ENCODE measurements at regions of chr6 and their contacts with region 1.

Region 1: DNA sequence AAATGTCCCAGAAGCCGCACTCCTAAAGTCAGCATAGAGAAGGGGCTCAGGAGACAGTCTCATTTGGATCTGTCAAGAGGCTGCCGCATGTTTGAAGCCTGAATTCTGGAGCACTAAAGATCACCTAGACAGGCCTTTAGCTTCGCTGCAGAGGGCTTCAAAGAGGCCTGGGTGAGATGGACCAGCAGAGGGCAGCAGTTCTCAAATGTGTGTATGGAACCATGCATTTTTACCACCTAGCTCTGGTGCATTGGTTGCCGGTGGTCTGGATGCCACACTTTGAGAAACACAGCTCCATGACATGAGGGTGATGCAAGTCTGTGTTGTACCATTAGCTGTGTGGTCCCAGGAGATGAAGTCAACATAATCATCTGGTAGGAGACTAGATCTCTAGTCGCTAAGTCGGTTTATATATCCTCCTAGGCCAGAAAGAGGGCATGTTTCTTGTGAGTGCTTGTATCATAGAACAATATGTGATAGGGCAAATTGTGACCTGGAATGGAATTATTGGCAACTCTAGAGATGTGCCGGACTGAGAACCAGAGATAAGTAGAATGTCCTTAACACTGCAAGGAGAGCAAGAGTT is 64.8 kb downstream of the KIAA0319 start:
- DNase-seq: peak; percentile 85
- ATAC-seq: peak; percentile 89
- H3K4me3 Mint-ChIP-seq: no peak overlapping the region
- H3K27ac Mint-ChIP-seq: no peak overlapping the region
- H3K4me1 Mint-ChIP-seq: peaks cover 25% of the 10 kb centered on the region
- H3K27me3 Mint-ChIP-seq: no peaks in the 10 kb centered on the region
- CTCF ChIP-seq: peak; percentile 55; the same call in 1 of the 2 replicates

Region 2: GRCh38 chr6:24481449-24481848 is 99.7 kb before region 1 on chr6:
- CTCF ChIA-PET with region 1: no interaction called
- POLR2A ChIA-PET with region 1: no interaction called
- DNase-seq: no peak
- ATAC-seq: no peak
- H3K4me3 Mint-ChIP-seq: no peak overlapping the region
- H3K27ac Mint-ChIP-seq: no peak overlapping the region
- H3K4me1 Mint-ChIP-seq: no peaks in the 10 kb centered on the region
- H3K27me3 Mint-ChIP-seq: no peaks in the 10 kb centered on the region
- CTCF ChIP-seq: no peak

Region 3: GRCh38 chr6:24547243-24547642 is 33.9 kb before region 1 on chr6:
- CTCF ChIA-PET with region 1: interaction called, 12 read pairs
- POLR2A ChIA-PET with region 1: no interaction called
- DNase-seq: peak; percentile 36
- ATAC-seq: peak; percentile 69
- H3K4me3 Mint-ChIP-seq: no peak overlapping the region
- H3K27ac Mint-ChIP-seq: no peak overlapping the region
- H3K4me1 Mint-ChIP-seq: peaks cover 10% of the 10 kb centered on the region
- H3K27me3 Mint-ChIP-seq: no peaks in the 10 kb centered on the region
- CTCF ChIP-seq: no peak

Region 4: GRCh38 chr6:24595512-24596217 is 14.5 kb after region 1 on chr6:
- CTCF ChIA-PET with region 1: interaction called, 15 read pairs
- POLR2A ChIA-PET with region 1: no interaction called
- DNase-seq: no peak
- ATAC-seq: no peak
- H3K4me3 Mint-ChIP-seq: no peak overlapping the region
- H3K27ac Mint-ChIP-seq: no peak overlapping the region
- H3K4me1 Mint-ChIP-seq: peaks cover 11% of the 10 kb centered on the region
- H3K27me3 Mint-ChIP-seq: no peaks in the 10 kb centered on the region
- CTCF ChIP-seq: no peak

Region 5: GRCh38 chr6:24646782-24647181 is 65.6 kb after region 1 on chr6:
- CTCF ChIA-PET with region 1: interaction called, 19 read pairs
- POLR2A ChIA-PET with region 1: interaction called, 3 read pairs
- DNase-seq: no peak
- ATAC-seq: no peak; the same call in 1 of the 2 replicates
- H3K4me3 Mint-ChIP-seq: peak overlapping the region; percentile 91
- H3K27ac Mint-ChIP-seq: no peak overlapping the region
- H3K4me1 Mint-ChIP-seq: peaks cover 12% of the 10 kb centered on the region
- H3K27me3 Mint-ChIP-seq: peaks cover 7% of the 10 kb centered on the region
- CTCF ChIP-seq: no peak

Region 6: GRCh38 chr6:24683297-24684296 is 102.4 kb after region 1 on chr6:
- CTCF ChIA-PET with region 1: interaction called, 19 read pairs
- POLR2A ChIA-PET with region 1: no interaction called
- DNase-seq: no peak
- ATAC-seq: peak; percentile 75
- H3K4me3 Mint-ChIP-seq: peak overlapping the region; percentile 60
- H3K27ac Mint-ChIP-seq: peak overlapping the region; percentile 100
- H3K4me1 Mint-ChIP-seq: peaks cover 71% of the 10 kb centered on the region
- H3K27me3 Mint-ChIP-seq: no peaks in the 10 kb centered on the region
- CTCF ChIP-seq: no peak

Region 7: GRCh38 chr6:24883618-24884017 is 302.4 kb after region 1 on chr6:
- CTCF ChIA-PET with region 1: no interaction called
- POLR2A ChIA-PET with region 1: no interaction called
- DNase-seq: no peak
- ATAC-seq: no peak
- H3K4me3 Mint-ChIP-seq: no peak overlapping the region
- H3K27ac Mint-ChIP-seq: 0 out of 2 replicates have a peak overlapping the region, but pooled peaks have one; percentile 41
- H3K4me1 Mint-ChIP-seq: peaks cover 54% of the 10 kb centered on the region
- H3K27me3 Mint-ChIP-seq: no peaks in the 10 kb centered on the region
- CTCF ChIP-seq: no peak

Region 8: GRCh38 chr6:24910961-24911712 is 330.0 kb after region 1 on chr6:
- CTCF ChIA-PET with region 1: no interaction called
- POLR2A ChIA-PET with region 1: no interaction called
- DNase-seq: peak; percentile 69
- ATAC-seq: peak; percentile 50
- H3K4me3 Mint-ChIP-seq: peak overlapping the region; percentile 78
- H3K27ac Mint-ChIP-seq: no peak overlapping the region
- H3K4me1 Mint-ChIP-seq: peaks cover 34% of the 10 kb centered on the region
- H3K27me3 Mint-ChIP-seq: peaks cover 51% of the 10 kb centered on the region
- CTCF ChIP-seq: no peak